ENCODE measurements at regions of chr11 and their contacts with region 1.

Region 1: DNA sequence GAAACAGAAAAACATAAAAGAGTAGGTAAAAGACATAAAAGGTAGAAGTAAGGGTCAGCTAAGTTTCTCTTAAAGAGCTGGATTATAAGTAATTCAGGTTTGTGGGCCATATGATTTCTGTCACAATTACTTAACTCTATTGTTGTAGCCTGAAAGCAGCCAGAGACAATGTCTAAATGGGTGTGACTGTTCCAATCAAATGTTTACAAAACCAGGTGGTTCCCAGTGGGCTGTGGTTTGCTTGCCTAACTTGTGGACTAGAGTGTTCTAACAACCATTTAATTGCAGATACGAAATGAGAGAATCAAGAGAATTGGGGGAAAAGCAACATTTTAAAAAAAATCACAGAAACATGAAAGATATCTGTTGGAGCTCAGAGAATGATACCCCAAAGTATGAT is 22.6 kb downstream of the OR6M1 start:
- DNase-seq: no peak
- ATAC-seq: no peak
- H3K4me3 ChIP-seq: no peak overlapping the region
- H3K4me3 Mint-ChIP-seq: no peak overlapping the region
- H3K27ac ChIP-seq: no peak overlapping the region
- H3K27ac Mint-ChIP-seq: no peak overlapping the region
- H3K4me1 ChIP-seq: no peaks in the 10 kb centered on the region
- H3K4me1 Mint-ChIP-seq: no peaks in the 10 kb centered on the region
- H3K27me3 ChIP-seq: no peaks in the 10 kb centered on the region
- H3K27me3 Mint-ChIP-seq: peaks cover 22% of the 10 kb centered on the region
- CTCF ChIP-seq: no peak

Region 2: DNA sequence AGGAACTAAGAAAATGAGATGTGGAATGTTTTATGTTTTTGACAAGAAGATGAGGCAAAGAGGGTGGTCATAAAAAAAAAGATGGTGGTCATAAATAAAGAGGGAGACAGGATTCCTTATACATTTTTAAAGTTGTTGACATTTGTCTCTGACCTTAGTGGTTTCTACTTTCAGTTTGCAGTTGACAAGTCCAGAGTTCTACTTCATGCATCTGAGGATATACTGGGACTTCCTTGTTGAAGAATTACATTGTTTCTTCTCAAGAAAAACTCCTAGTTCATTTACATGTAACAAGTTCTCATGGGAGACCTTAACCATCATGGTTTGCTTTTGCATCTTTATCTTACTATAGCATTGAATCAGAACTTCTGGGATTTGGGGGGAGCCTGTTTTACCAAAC is 30.4 kb before region 1 on chr11:
- CTCF ChIA-PET with region 1: no interaction called
- POLR2A ChIA-PET with region 1: no interaction called
- intact Hi-C with region 1: loop called in 1 of 2 experiments (anchors 1 kb)
- DNase-seq: no peak
- ATAC-seq: no peak
- H3K4me3 ChIP-seq: no peak overlapping the region
- H3K4me3 Mint-ChIP-seq: no peak overlapping the region
- H3K27ac ChIP-seq: no peak overlapping the region
- H3K27ac Mint-ChIP-seq: no peak overlapping the region
- H3K4me1 ChIP-seq: no peaks in the 10 kb centered on the region
- H3K4me1 Mint-ChIP-seq: no peaks in the 10 kb centered on the region
- H3K27me3 ChIP-seq: no peaks in the 10 kb centered on the region
- H3K27me3 Mint-ChIP-seq: peaks cover 36% of the 10 kb centered on the region
- CTCF ChIP-seq: no peak